Mammary epithelial cell (primary cell): ENCODE measurements at regions of chr4 and their contacts with region 1.

Region 1: DNA sequence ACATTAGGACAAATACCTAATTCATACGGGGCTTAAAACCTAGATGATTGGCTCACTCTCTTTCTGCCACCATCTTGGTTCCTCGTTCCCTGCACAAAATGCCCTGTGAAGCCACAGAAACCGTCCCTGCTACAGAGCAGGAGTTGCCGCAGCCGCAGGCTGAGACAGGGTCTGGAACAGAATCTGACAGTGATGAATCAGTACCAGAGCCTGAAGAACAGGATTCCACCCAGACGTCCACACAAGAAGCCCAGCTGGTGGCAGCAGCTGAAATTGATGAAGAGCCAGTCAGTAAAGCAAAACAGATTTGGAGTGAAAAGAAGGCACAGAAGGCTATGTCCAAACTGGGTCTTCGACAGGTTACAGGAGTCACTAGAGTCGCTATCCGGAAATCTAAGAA is 34.3 kb downstream of the TRIM61 start:
- DNase-seq: no peak
- H3K4me3 ChIP-seq: no peak overlapping the region
- H3K27ac ChIP-seq: no peak overlapping the region
- H3K4me1 ChIP-seq: no peaks in the 10 kb centered on the region
- H3K27me3 ChIP-seq: no peaks in the 10 kb centered on the region
- CTCF ChIP-seq: no peak

Region 2: GRCh38 chr4:165027762-165028402 is 84.7 kb after region 1 on chr4:
- CTCF ChIA-PET with region 1: no interaction called
- dilution Hi-C with region 1: loop called (anchors 5 kb)
- in situ Hi-C with region 1: no loop called
- intact Hi-C with region 1: no loop called
- DNase-seq: no peak
- H3K4me3 ChIP-seq: no peak overlapping the region
- H3K27ac ChIP-seq: no peak overlapping the region
- H3K4me1 ChIP-seq: no peaks in the 10 kb centered on the region
- H3K27me3 ChIP-seq: no peaks in the 10 kb centered on the region
- CTCF ChIP-seq: no peak

Region 3: DNA sequence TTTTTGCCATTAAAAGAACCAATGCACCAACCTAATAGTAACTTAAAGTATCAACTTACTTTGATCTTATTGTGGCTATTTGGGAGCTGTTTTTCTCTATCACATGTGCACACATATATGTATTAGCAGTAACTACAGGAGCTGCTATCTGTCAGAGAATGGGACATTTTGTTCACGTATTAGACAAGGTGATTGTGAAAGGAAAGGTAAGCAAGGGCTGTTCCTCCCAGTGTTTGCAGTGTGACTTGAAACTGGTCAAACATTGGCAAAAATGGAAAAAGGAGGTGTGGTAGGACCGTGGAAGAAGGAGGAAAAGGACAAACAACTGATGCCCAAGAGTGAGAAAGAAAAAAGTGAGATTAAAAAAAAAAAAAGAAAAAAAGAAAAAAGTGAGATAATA is 221.1 kb after region 1 on chr4:
- CTCF ChIA-PET with region 1: no interaction called
- dilution Hi-C with region 1: no loop called
- in situ Hi-C with region 1: no loop called
- intact Hi-C with region 1: no loop called
- DNase-seq: no peak
- H3K4me3 ChIP-seq: no peak overlapping the region
- H3K27ac ChIP-seq: no peak overlapping the region
- H3K4me1 ChIP-seq: no peaks in the 10 kb centered on the region
- H3K27me3 ChIP-seq: no peaks in the 10 kb centered on the region
- CTCF ChIP-seq: no peak